ENCODE measurements at regions of chr17 and their contacts with region 1.

Region 1: GRCh38 chr17:37701496-37701898 is 43.4 kb downstream of the HNF1B start:
- DNase-seq: peak; percentile 40
- H3K4me3 Mint-ChIP-seq: peak overlapping the region; percentile 35
- H3K27ac Mint-ChIP-seq: peak overlapping the region; percentile 20
- H3K4me1 Mint-ChIP-seq: peaks cover 41% of the 10 kb centered on the region
- H3K27me3 Mint-ChIP-seq: peaks cover 24% of the 10 kb centered on the region

Region 2: DNA sequence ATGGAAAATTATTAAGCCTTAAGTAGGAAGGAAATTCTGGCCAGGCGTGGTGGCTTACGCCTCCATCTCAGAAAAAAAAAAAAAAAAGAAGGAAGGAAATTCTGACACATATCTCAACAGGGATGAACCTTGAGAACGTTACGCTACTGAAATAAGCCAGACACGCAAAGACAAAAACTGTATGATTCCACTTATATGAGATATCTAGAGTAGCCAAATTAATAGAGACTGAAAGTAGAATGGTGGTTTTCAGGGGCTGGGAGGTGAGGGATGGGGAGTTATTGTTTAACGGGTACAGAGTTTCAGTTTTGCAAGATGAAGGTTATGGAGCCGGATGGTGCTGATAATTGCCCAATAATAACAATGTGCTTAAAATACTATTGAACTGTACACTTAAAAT is 59.6 kb after region 1 on chr17:
- intact Hi-C with region 1: loop called (anchors 2 kb)
- DNase-seq: no peak
- H3K4me3 Mint-ChIP-seq: no peak overlapping the region
- H3K27ac Mint-ChIP-seq: peak overlapping the region; percentile 67
- H3K4me1 Mint-ChIP-seq: peaks cover 52% of the 10 kb centered on the region
- H3K27me3 Mint-ChIP-seq: no peaks in the 10 kb centered on the region

Measured in activated T-helper 2 cell treated with anti-CD3 and anti-CD28 coated beads, Interferon-gamma antibody, Interleukin-2, Interleukin-4, amounts not matched to agents 10 μg/mL and 5 μg/mL and 100 μg/mL, durations not matched to agents 14 hours and 24 hours and 36 hours (primary cell).